Caco-2 (cell line): ENCODE measurements at regions of chr1 and their contacts with region 1.

Region 1: GRCh38 chr1:70487910-70488665 is 77.0 kb downstream of the CTH start:
- DNase-seq: peak in 1 of 2 experiments; percentile 26
- H3K4me3 ChIP-seq: no peak overlapping the region
- H3K4me3 Mint-ChIP-seq: no peak overlapping the region
- H3K27ac Mint-ChIP-seq: no peak overlapping the region
- H3K4me1 ChIP-seq: no peaks in the 10 kb centered on the region
- H3K4me1 Mint-ChIP-seq: no peaks in the 10 kb centered on the region
- H3K27me3 ChIP-seq: no peaks in the 10 kb centered on the region
- H3K27me3 Mint-ChIP-seq: no peaks in the 10 kb centered on the region
- CTCF ChIP-seq: peak; percentile 34 to 63

Region 2: GRCh38 chr1:70134148-70134547 is 353.9 kb before region 1 on chr1:
- CTCF ChIA-PET with region 1: no interaction called
- POLR2A ChIA-PET with region 1: no interaction called
- intact Hi-C with region 1: loop called (anchors 1 kb)
- DNase-seq: no peak
- H3K4me3 ChIP-seq: no peak overlapping the region
- H3K4me3 Mint-ChIP-seq: no peak overlapping the region
- H3K27ac Mint-ChIP-seq: no peak overlapping the region
- H3K4me1 ChIP-seq: no peaks in the 10 kb centered on the region
- H3K4me1 Mint-ChIP-seq: no peaks in the 10 kb centered on the region
- H3K27me3 ChIP-seq: no peaks in the 10 kb centered on the region
- H3K27me3 Mint-ChIP-seq: no peaks in the 10 kb centered on the region
- CTCF ChIP-seq: no peak

Region 3: GRCh38 chr1:70737134-70737533 is 249.0 kb after region 1 on chr1:
- CTCF ChIA-PET with region 1: no interaction called
- POLR2A ChIA-PET with region 1: no interaction called
- intact Hi-C with region 1: no loop called
- DNase-seq: no peak
- H3K4me3 ChIP-seq: no peak overlapping the region
- H3K4me3 Mint-ChIP-seq: no peak overlapping the region
- H3K27ac Mint-ChIP-seq: no peak overlapping the region
- H3K4me1 ChIP-seq: no peaks in the 10 kb centered on the region
- H3K4me1 Mint-ChIP-seq: no peaks in the 10 kb centered on the region
- H3K27me3 ChIP-seq: no peaks in the 10 kb centered on the region
- H3K27me3 Mint-ChIP-seq: no peaks in the 10 kb centered on the region
- CTCF ChIP-seq: no peak